CD4-positive, alpha-beta T cell (primary cell): ENCODE measurements at regions of chr5 and their contacts with region 1.

Region 1: DNA sequence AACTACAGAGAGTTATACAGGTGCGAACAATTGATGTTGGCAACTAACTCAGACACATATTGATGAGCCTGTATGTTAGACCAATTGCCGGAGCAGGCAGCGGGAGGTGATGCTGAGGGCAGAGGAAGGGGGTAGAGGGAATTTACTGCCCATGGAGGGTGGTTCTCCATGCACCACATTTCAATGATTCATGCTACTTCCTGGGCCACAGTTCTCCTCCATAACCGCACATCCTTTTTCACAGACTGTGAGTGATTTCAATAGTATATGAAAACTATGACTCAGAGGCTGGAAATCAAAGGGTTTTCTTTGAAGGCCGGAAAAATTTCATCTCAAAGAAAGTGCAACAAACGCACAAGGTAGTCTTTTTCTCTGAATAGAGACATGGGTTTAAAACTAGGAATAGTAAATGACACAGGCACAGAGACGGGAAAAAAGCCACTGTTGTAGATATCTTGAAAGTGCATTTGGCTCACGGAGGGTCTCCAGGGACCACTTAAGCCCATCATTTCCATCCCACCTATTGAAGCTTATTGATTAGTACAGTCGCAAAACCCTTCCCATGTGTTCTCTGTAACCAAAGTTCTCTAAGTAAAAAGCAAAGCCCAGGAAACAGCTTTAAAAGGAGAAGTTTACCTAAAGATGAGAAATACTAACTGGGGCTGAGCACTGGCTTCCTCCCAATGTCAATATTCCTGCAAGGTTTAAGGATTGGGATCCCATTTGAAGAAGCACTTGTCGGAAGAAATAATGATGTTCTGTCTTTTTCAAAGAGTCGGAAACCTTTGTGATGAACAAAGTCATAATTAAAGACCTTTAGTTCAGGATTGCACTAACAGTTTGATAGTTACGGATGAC is 28.0 kb upstream of the ADAM19 start:
- DNase-seq: peak; percentile 32 to 92 (median 56)
- ATAC-seq: peak; percentile 85
- H3K4me3 ChIP-seq: peak overlapping the region; percentile 11
- H3K4me3 Mint-ChIP-seq: peak overlapping the region; percentile 26
- H3K27ac ChIP-seq: peak overlapping the region; percentile 43 to 76
- H3K27ac Mint-ChIP-seq: peak overlapping the region; percentile 84
- H3K4me1 ChIP-seq: peaks cover 62% of the 10 kb centered on the region
- H3K4me1 Mint-ChIP-seq: peaks cover 53% of the 10 kb centered on the region
- H3K27me3 ChIP-seq: no peaks in the 10 kb centered on the region
- H3K27me3 Mint-ChIP-seq: no peaks in the 10 kb centered on the region
- CTCF ChIP-seq: no peak

Region 2: DNA sequence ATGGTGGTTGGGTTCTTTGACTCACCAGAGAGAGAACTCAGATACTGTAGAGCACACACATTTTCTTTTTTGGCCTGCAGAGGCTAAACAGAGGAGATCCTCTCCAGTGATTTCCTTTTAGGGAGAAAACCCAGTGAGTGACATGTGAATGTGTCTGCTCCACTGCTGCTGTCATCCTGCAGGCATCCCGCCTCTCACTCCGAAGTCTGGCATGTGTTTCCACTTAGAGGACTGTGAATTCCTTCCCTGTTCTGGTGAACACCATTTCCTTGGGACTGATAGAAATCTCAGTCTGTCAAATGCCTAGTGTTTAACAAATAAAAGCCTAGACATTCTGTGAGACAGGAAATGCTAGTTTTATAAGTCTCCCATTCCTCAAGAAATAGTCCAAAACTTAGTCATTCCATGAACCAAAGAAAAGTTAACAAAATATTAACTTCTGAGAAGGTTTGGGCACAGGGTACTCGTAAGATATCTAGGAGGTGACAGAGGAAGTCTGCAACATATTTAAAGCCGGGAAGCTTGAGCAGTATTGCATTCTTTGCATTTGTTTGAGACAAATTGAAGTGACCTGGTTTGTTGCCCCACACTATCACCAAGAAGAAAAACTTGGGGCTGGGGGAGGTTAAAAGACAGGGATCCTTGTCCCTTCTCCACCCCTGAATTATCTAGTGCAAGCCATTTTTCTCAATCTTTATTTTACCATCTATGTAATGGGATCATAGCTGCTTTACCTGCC is 218.4 kb before region 1 on chr5:
- CTCF ChIA-PET with region 1: no interaction called
- POLR2A ChIA-PET with region 1: no interaction called
- intact Hi-C with region 1: no loop called
- DNase-seq: no peak
- ATAC-seq: no peak
- H3K4me3 ChIP-seq: no peak overlapping the region
- H3K4me3 Mint-ChIP-seq: no peak overlapping the region
- H3K27ac ChIP-seq: no peak overlapping the region
- H3K27ac Mint-ChIP-seq: peak overlapping the region; percentile 57
- H3K4me1 ChIP-seq: peaks cover 11% of the 10 kb centered on the region
- H3K4me1 Mint-ChIP-seq: peaks cover 2% of the 10 kb centered on the region
- H3K27me3 ChIP-seq: no peaks in the 10 kb centered on the region
- H3K27me3 Mint-ChIP-seq: no peaks in the 10 kb centered on the region
- CTCF ChIP-seq: no peak

Region 3: DNA sequence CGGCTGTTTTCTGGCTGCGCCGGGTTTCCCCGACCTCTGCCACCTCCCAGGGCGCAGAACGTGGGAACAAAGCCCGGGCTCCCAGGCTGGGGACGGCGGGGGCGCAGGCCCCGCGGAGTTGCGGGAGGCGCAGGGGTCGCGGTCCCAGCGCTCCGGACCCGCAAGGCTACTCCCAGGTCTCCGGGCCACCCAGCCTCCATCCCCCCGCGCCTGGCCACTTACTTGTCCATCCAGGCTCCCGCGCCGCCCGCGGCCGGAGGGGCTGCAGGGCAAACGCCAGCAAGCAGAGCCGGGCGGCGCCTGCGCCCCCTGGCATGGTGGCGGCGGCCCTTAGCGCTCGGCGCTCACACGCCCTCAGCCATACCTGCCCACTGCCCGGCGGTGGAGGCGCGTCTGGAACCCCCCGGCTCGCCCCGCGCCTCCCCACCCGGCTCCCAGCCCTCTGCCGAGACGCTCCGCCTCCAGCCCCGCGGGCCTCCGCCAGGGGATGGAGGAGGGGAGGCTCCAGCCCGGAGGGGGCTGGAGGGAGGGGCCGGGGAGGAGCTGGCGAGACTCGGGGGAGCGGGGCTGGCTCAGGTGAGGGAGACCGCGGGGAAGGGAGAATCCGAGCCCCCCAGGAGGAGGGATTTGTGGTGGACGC is 28.1 kb before region 1 on chr5 and contains the start of gene ADAM19:
- CTCF ChIA-PET with region 1: no interaction called
- POLR2A ChIA-PET with region 1: no interaction called
- intact Hi-C with region 1: loop called in 1 of 2 experiments (anchors 2 kb)
- DNase-seq: peak in 9 of 14 experiments; percentile 22 to 79 (median 54)
- ATAC-seq: peak; percentile 70
- H3K4me3 ChIP-seq: peak within 1 kb of the TSS; percentile 98
- H3K4me3 Mint-ChIP-seq: peak within 1 kb of the TSS; percentile 89
- H3K27ac ChIP-seq: peak within 1 kb of the TSS; percentile 37 to 64
- H3K27ac Mint-ChIP-seq: peak within 1 kb of the TSS; percentile 76
- H3K4me1 ChIP-seq: peaks cover 47% of the 10 kb centered on the region
- H3K4me1 Mint-ChIP-seq: peaks cover 49% of the 10 kb centered on the region
- H3K27me3 ChIP-seq: peaks cover 0 to 3% of the 10 kb centered on the region in 2 experiments
- H3K27me3 Mint-ChIP-seq: no peaks in the 10 kb centered on the region
- CTCF ChIP-seq: no peak
- total RNA-seq, gene ADAM19: 26.7 to 29.1 TPM